Mammary epithelial cell (primary cell): ENCODE measurements at regions of chr9 and their contacts with region 1.

Region 1: GRCh38 chr9:15453956-15454355 is 31.3 kb downstream of the SNAPC3 start:
- DNase-seq: no peak
- H3K4me3 ChIP-seq: no peak overlapping the region
- H3K27ac ChIP-seq: no peak overlapping the region
- H3K4me1 ChIP-seq: no peaks in the 10 kb centered on the region
- H3K27me3 ChIP-seq: no peaks in the 10 kb centered on the region
- CTCF ChIP-seq: no peak

Region 2: GRCh38 chr9:14389657-14390056 is 1064.3 kb before region 1 on chr9:
- CTCF ChIA-PET with region 1: interaction called, 18 read pairs
- dilution Hi-C with region 1: no loop called
- in situ Hi-C with region 1: no loop called
- intact Hi-C with region 1: no loop called
- DNase-seq: no peak
- H3K4me3 ChIP-seq: no peak overlapping the region
- H3K27ac ChIP-seq: no peak overlapping the region
- H3K4me1 ChIP-seq: no peaks in the 10 kb centered on the region
- H3K27me3 ChIP-seq: no peaks in the 10 kb centered on the region
- CTCF ChIP-seq: no peak

Region 3: DNA sequence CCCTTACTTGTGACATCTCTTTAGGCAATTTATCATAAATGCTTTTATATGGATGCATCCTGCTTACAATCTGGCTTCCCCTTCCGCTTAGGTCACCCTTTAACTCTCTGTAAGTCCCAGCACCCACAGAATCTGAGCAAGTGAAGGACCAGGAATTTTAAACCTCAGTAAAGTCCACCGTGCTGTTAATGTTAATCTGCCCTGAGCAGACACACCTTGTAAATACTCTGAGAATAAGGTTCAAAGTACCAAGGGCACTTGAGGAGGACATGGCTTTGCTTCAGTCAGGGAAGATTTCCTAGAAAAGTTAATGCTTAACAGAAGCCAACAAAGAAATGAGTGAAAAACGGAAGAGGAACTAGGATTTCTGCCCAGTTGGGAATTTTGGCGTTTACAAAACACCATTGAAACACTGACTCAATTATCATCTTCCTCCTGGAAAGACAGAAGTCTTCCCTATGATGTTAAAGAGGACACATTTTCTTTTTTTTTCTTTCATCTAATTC is 120.5 kb before region 1 on chr9:
- CTCF ChIA-PET with region 1: no interaction called
- dilution Hi-C with region 1: no loop called
- in situ Hi-C with region 1: no loop called
- intact Hi-C with region 1: no loop called
- DNase-seq: no peak
- H3K4me3 ChIP-seq: no peak overlapping the region
- H3K27ac ChIP-seq: no peak overlapping the region
- H3K4me1 ChIP-seq: no peaks in the 10 kb centered on the region
- H3K27me3 ChIP-seq: no peaks in the 10 kb centered on the region
- CTCF ChIP-seq: no peak

Region 4: GRCh38 chr9:15469406-15469805 is 15.4 kb after region 1 on chr9:
- CTCF ChIA-PET with region 1: no interaction called
- dilution Hi-C with region 1: no loop called
- in situ Hi-C with region 1: no loop called
- intact Hi-C with region 1: no loop called
- DNase-seq: no peak
- H3K4me3 ChIP-seq: no peak overlapping the region
- H3K27ac ChIP-seq: no peak overlapping the region
- H3K4me1 ChIP-seq: no peaks in the 10 kb centered on the region
- H3K27me3 ChIP-seq: no peaks in the 10 kb centered on the region
- CTCF ChIP-seq: no peak